ENCODE measurements at regions of chr22 and their contacts with region 1.

Region 1: GRCh38 chr22:36331306-36331911 is 56.4 kb downstream of the MYH9 start:
- DNase-seq: peak in 1 of 2 experiments; percentile 65
- H3K4me3 ChIP-seq: no peak overlapping the region
- H3K27ac ChIP-seq: peak overlapping the region; percentile 98
- H3K4me1 ChIP-seq: peaks cover 9 to 52% (median 33%) of the 10 kb centered on the region in 4 experiments
- H3K27me3 ChIP-seq: no peaks in the 10 kb centered on the region
- CTCF ChIP-seq: no peak
- EP300 ChIP-seq: peak in 1 of 2 experiments; percentile 84; a peak in 1 of 3 replicates
- POLR2A ChIP-seq: peak in 1 of 2 experiments; percentile 59; a peak in 2 of 3 replicates
- RAD21 ChIP-seq: no peak

Region 2: GRCh38 chr22:36104988-36105387 is 226.4 kb before region 1 on chr22:
- CTCF ChIA-PET with region 1: no interaction called
- POLR2A ChIA-PET with region 1: no interaction called
- DNase-seq: no peak
- H3K4me3 ChIP-seq: no peak overlapping the region
- H3K27ac ChIP-seq: no peak overlapping the region
- H3K4me1 ChIP-seq: peaks cover 0 to 1% (median under 1%) of the 10 kb centered on the region in 4 experiments; a peak in 2 of 7 replicates
- H3K27me3 ChIP-seq: no peaks in the 10 kb centered on the region
- CTCF ChIP-seq: no peak
- EP300 ChIP-seq: no peak
- POLR2A ChIP-seq: no peak
- RAD21 ChIP-seq: no peak

Region 3: DNA sequence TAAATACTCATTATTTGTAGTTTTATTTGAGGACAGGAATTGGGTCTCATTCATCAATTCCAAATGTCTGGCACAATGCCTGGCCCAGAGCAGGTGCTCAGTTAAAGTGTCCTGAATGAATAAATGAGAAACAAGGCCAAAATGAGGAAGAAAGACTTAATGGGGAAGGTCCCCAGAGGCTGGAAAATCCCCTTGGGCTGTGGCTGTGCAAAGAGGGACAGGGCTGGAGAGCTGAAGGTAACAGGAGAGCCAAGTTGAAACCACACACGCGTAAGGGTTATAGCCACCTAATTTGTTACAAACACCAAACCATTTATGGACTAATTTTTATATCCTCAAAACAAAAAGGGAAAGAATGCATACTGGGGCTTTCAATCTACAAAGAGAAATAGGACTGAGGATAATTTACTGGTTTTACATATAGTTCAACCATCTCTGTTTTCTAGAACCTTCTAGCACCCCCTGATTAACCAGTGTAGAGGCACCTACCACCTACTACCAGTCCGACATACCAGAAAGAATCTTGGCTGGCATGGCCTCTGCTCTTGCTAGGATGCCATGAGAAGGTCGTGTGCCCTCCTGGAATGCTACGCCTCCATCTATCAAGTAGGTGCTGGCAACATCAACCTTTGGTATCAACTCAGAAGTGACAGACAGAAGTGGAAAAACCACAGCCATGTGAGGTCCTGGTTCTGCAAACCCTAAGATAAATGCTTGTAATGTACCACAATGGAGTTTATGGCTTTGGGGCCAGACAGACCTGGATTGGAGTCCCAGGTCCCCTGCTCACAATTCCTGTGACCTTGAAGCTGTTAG is 28.0 kb after region 1 on chr22:
- CTCF ChIA-PET with region 1: interaction called, 4 read pairs
- POLR2A ChIA-PET with region 1: interaction called, 12 read pairs
- DNase-seq: no peak
- H3K4me3 ChIP-seq: peak overlapping the region in 3 of 4 experiments; percentile 3 to 20 (median 10); a peak in 2 of 8 replicates
- H3K27ac ChIP-seq: peak overlapping the region; percentile 71
- H3K4me1 ChIP-seq: peaks cover 17 to 47% (median 40%) of the 10 kb centered on the region in 4 experiments
- H3K27me3 ChIP-seq: no peaks in the 10 kb centered on the region
- CTCF ChIP-seq: no peak
- EP300 ChIP-seq: no peak
- POLR2A ChIP-seq: no peak
- RAD21 ChIP-seq: no peak

Region 4: DNA sequence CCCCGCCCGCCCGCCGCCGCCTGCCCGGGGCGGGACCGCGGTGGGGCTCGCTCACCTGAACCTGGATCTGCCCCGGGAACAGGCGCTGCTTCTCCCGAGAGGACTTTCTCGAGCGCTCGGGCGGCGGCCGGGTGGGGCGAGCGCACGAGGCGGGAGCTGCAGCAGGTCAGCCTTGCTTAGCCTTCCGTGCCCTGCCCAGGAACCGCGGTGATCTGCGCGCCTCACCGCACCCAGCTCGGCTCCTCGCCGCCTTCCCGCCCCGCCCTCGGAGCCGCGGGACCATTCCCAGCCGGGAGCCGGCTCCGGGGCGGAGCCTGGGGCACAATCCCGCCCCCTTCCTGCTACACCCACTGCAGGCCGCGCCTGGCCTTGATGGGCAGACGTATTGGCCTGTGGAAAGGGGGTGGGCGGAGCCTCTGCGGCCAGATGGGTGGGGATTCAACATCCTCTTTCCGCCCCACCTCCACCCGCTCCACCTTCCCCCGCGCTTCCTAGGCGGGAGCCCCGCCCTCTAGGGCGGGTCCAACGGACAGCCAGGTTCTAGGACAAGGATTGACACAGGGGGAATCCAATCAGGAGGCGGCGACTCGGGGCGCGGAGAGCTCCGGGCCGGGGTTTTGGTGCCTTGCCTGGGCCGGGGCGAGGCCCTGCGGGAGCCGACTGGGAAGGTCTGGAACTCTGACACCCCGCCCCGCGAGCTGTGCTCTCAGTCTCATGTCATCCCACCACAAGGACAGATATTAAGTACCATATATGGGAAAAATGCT is 56.5 kb after region 1 on chr22 and contains the start of gene MYH9:
- CTCF ChIA-PET with region 1: interaction called, 3 read pairs
- POLR2A ChIA-PET with region 1: interaction called, 14 read pairs
- DNase-seq: peak; percentile 99 to 100
- H3K4me3 ChIP-seq: peak within 1 kb of the TSS; percentile 52 to 98 (median 86)
- H3K27ac ChIP-seq: peak within 1 kb of the TSS; percentile 79; the same call in 1 of the 2 replicates
- H3K4me1 ChIP-seq: peaks cover 0 to 16% (median 5%) of the 10 kb centered on the region in 4 experiments; a peak in 6 of 7 replicates
- H3K27me3 ChIP-seq: no peaks in the 10 kb centered on the region
- CTCF ChIP-seq: no peak
- EP300 ChIP-seq: no peak
- POLR2A ChIP-seq: peak; percentile 94 to 95
- RAD21 ChIP-seq: no peak
- total RNA-seq, gene MYH9: 295 and 322 TPM in 2 replicates

Region 5: GRCh38 chr22:36454916-36455570 is 123.6 kb after region 1 on chr22:
- CTCF ChIA-PET with region 1: interaction called, 3 read pairs
- POLR2A ChIA-PET with region 1: interaction called, 32 read pairs
- DNase-seq: peak; percentile 91 to 98
- H3K4me3 ChIP-seq: peak overlapping the region; percentile 47 to 67 (median 60)
- H3K27ac ChIP-seq: peak overlapping the region; percentile 84; the same call in 1 of the 2 replicates
- H3K4me1 ChIP-seq: peaks cover 7 to 25% (median 12%) of the 10 kb centered on the region in 4 experiments
- H3K27me3 ChIP-seq: no peaks in the 10 kb centered on the region
- CTCF ChIP-seq: peak in 2 of 3 experiments; percentile 9 to 26; a peak in 2 of 4 replicates
- EP300 ChIP-seq: peak in 1 of 2 experiments; percentile 69; a peak in 1 of 3 replicates
- POLR2A ChIP-seq: peak in 1 of 2 experiments; percentile 73; a peak in 2 of 3 replicates
- RAD21 ChIP-seq: peak; percentile 26 to 38; a peak in 3 of 4 replicates

Region 6: GRCh38 chr22:36481393-36482168 is 150.2 kb after region 1 on chr22 and contains the start of gene TXN2:
- CTCF ChIA-PET with region 1: interaction called, 29 read pairs
- POLR2A ChIA-PET with region 1: interaction called, 13 read pairs
- DNase-seq: peak; percentile 77 to 92
- H3K4me3 ChIP-seq: peak within 1 kb of the TSS; percentile 58 to 97 (median 71)
- H3K27ac ChIP-seq: peak within 1 kb of the TSS; percentile 60
- H3K4me1 ChIP-seq: peaks cover 0 to 5% (median 2%) of the 10 kb centered on the region in 4 experiments; a peak in 4 of 7 replicates
- H3K27me3 ChIP-seq: peaks cover 0 to 7% (median 5%) of the 10 kb centered on the region in 4 experiments; a peak in 5 of 7 replicates
- CTCF ChIP-seq: no peak
- EP300 ChIP-seq: no peak
- POLR2A ChIP-seq: peak; percentile 81 to 91
- RAD21 ChIP-seq: no peak
- total RNA-seq, gene TXN2: 47.5 and 53.8 TPM in 2 replicates

Measured in H1 (cell line).